ENCODE measurements at regions of chr13 and their contacts with region 1.

Region 1: GRCh38 chr13:42969558-42970172 is 22.4 kb downstream of the EPSTI1 start:
- DNase-seq: peak; percentile 71
- ATAC-seq: peak; percentile 69
- H3K4me3 Mint-ChIP-seq: peak overlapping the region; percentile 41
- H3K27ac Mint-ChIP-seq: peak overlapping the region; percentile 46
- H3K4me1 Mint-ChIP-seq: peaks cover 31% of the 10 kb centered on the region
- H3K27me3 Mint-ChIP-seq: no peaks in the 10 kb centered on the region
- CTCF ChIP-seq: no peak

Region 2: GRCh38 chr13:42333613-42334328 is 635.9 kb before region 1 on chr13:
- CTCF ChIA-PET with region 1: interaction called, 4 read pairs
- POLR2A ChIA-PET with region 1: no interaction called
- intact Hi-C with region 1: loop called (anchors 2 kb)
- DNase-seq: no peak
- ATAC-seq: peak; percentile 84
- H3K4me3 Mint-ChIP-seq: no peak overlapping the region
- H3K27ac Mint-ChIP-seq: no peak overlapping the region
- H3K4me1 Mint-ChIP-seq: peaks cover 21% of the 10 kb centered on the region
- H3K27me3 Mint-ChIP-seq: no peaks in the 10 kb centered on the region
- CTCF ChIP-seq: no peak

Region 3: DNA sequence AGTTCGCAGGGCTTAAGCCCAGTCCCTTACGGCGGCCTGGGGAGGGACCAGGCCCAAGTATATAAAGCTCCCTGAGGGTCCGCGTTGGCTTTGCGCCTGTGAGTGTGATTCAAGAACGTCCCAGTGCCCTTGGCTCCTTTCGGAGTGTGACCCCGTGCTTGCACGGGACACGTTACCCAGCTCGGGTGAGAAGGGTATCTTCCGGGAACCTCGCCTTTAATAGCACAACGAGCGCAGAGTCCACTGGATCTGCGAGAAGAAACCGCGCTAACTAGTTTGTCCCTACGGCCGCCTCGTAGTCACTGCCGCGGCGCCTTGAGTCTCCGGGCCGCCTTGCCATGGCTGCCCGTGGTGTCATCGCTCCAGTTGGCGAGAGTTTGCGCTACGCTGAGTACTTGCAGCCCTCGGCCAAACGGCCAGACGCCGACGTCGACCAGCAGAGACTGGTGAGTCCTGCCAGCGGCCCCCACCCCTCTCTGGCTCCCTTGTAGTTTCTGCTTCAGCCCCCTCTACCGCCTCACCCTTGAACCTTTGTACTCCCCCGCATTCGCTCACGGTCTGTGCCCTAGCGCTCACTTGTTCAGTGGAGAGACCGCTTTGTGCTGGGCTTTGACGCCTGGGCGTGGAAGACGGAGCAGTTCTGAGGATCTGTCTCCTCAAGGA is 53.8 kb after region 1 on chr13 and contains the start of gene DNAJC15:
- CTCF ChIA-PET with region 1: interaction called, 12 read pairs
- POLR2A ChIA-PET with region 1: interaction called, 14 read pairs
- intact Hi-C with region 1: loop called (anchors 2 kb)
- DNase-seq: peak; percentile 81
- ATAC-seq: peak; percentile 85
- H3K4me3 Mint-ChIP-seq: peak within 1 kb of the TSS; percentile 94
- H3K27ac Mint-ChIP-seq: peak within 1 kb of the TSS; percentile 97
- H3K4me1 Mint-ChIP-seq: peaks cover 47% of the 10 kb centered on the region
- H3K27me3 Mint-ChIP-seq: no peaks in the 10 kb centered on the region
- CTCF ChIP-seq: no peak
- total RNA-seq, gene DNAJC15: 19.1 and 19.3 TPM in 2 replicates

Region 4: GRCh38 chr13:43085545-43085944 is 115.9 kb after region 1 on chr13:
- CTCF ChIA-PET with region 1: interaction called, 14 read pairs
- POLR2A ChIA-PET with region 1: interaction called, 3 read pairs
- intact Hi-C with region 1: loop called (anchors 2 kb)
- DNase-seq: no peak
- ATAC-seq: peak; percentile 28
- H3K4me3 Mint-ChIP-seq: no peak overlapping the region
- H3K27ac Mint-ChIP-seq: no peak overlapping the region
- H3K4me1 Mint-ChIP-seq: peaks cover 23% of the 10 kb centered on the region
- H3K27me3 Mint-ChIP-seq: no peaks in the 10 kb centered on the region
- CTCF ChIP-seq: no peak

Region 5: DNA sequence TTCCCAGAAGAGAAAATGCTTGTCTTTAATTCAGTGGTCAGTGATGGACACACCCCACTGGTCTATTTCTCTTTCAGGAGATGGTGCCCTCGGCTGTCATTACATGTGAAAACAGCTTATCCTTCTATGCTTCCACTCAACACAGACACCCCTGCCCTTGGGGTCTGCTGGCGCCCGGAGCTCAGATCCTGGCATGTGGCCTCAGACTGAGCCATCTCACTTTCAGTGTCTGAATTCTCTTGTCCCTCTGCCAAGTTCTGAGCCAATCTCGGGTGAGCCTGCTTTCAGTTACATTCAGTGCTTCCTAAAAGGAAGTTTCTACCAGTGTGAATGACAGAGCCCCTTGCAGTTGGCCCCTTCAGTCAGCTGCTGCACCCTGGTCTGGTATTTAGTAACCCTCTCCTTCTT is 347.3 kb after region 1 on chr13:
- CTCF ChIA-PET with region 1: no interaction called
- POLR2A ChIA-PET with region 1: no interaction called
- intact Hi-C with region 1: loop called (anchors 10 kb)
- DNase-seq: no peak
- ATAC-seq: no peak
- H3K4me3 Mint-ChIP-seq: no peak overlapping the region
- H3K27ac Mint-ChIP-seq: no peak overlapping the region
- H3K4me1 Mint-ChIP-seq: no peaks in the 10 kb centered on the region
- H3K27me3 Mint-ChIP-seq: peaks cover 2% of the 10 kb centered on the region
- CTCF ChIP-seq: no peak

Region 6: GRCh38 chr13:43878892-43879754 is 909.5 kb after region 1 on chr13 and contains the start of gene CCDC122:
- CTCF ChIA-PET with region 1: interaction called, 3 read pairs
- POLR2A ChIA-PET with region 1: no interaction called
- intact Hi-C with region 1: loop called (anchors 2 kb)
- DNase-seq: peak; percentile 83
- ATAC-seq: peak; percentile 86
- H3K4me3 Mint-ChIP-seq: peak within 1 kb of the TSS; percentile 93
- H3K27ac Mint-ChIP-seq: peak within 1 kb of the TSS; percentile 93
- H3K4me1 Mint-ChIP-seq: peaks cover 32% of the 10 kb centered on the region
- H3K27me3 Mint-ChIP-seq: no peaks in the 10 kb centered on the region
- CTCF ChIP-seq: no peak
- total RNA-seq, gene CCDC122: 7.1 and 8.0 TPM in 2 replicates